ENCODE measurements at regions of chr2 and their contacts with region 1.

Region 1: GRCh38 chr2:48844417-48845155 is 89.1 kb upstream of the LHCGR start:
- DNase-seq: no peak

Region 2: GRCh38 chr2:48870503-48870902 is 25.9 kb after region 1 on chr2:
- intact Hi-C with region 1: loop called in 1 of 2 experiments (anchors 1 kb)
- DNase-seq: no peak

Region 3: GRCh38 chr2:49236316-49236715 is 391.7 kb after region 1 on chr2:
- intact Hi-C with region 1: no loop called
- DNase-seq: no peak